B cell (primary cell): ENCODE measurements at regions of chr11 and their contacts with region 1.

Region 1: DNA sequence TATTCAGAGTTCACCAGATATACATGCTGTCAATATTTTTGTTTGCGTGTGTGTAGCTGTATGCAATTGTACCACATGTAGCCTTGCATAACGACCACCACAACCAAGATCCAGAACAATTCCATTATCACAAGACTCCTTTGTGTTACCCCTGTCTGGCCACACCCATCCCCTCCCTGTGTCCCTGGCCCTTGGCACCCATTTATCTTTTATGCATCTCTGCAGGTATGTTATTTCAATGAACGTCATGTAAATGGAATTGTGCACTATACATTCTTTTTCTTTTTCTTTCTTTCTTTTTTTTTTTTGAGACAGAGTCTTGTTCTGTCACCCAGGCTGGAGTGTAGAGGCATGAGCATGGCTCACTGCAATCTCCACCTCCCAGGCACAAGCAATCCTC is 9.7 kb upstream of the PAFAH1B2 start:
- DNase-seq: no peak
- ATAC-seq: no peak
- H3K4me3 ChIP-seq: no peak overlapping the region
- H3K4me3 Mint-ChIP-seq: no peak overlapping the region
- H3K27ac ChIP-seq: no peak overlapping the region
- H3K27ac Mint-ChIP-seq: no peak overlapping the region
- H3K4me1 ChIP-seq: no peaks in the 10 kb centered on the region
- H3K4me1 Mint-ChIP-seq: no peaks in the 10 kb centered on the region
- H3K27me3 ChIP-seq: no peaks in the 10 kb centered on the region
- H3K27me3 Mint-ChIP-seq: no peaks in the 10 kb centered on the region
- CTCF ChIP-seq: no peak

Region 2: DNA sequence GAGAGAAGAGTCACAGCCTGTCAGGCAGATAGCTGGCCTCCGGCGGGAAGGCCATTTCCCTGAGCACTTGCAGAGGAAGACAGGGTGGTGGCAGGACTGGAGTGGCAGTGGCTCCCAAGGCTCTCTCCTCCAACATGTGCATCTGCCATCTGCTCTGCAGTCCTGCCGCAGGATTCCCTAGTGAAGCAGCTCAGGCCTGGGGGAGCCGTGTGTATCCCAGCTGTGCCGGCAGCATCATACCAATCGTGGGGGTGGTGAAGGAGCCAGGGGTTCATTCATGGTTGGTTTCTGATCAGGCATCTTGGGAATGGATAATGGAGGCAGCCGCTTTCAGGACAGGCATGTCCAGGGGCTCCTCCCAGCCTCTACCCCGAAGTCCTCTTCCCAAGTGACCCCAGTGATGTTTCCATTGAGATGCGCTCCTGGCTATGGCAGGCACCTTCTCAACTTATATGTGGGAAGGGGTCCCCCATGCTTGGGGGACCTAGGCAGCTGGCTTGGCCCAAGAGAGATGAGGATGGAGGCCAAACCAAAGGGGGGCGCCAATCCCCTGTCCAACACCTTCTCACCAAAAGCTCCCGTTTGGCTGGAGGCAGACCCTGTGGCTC is 70.9 kb after region 1 on chr11:
- CTCF ChIA-PET with region 1: no interaction called
- POLR2A ChIA-PET with region 1: no interaction called
- intact Hi-C with region 1: loop called (anchors 5 kb)
- DNase-seq: no peak
- ATAC-seq: no peak
- H3K4me3 ChIP-seq: no peak overlapping the region
- H3K4me3 Mint-ChIP-seq: no peak overlapping the region
- H3K27ac ChIP-seq: no peak overlapping the region
- H3K27ac Mint-ChIP-seq: peak overlapping the region; percentile 53
- H3K4me1 ChIP-seq: peaks cover 15 to 22% of the 10 kb centered on the region in 2 donors
- H3K4me1 Mint-ChIP-seq: peaks cover 9% of the 10 kb centered on the region
- H3K27me3 ChIP-seq: no peaks in the 10 kb centered on the region
- H3K27me3 Mint-ChIP-seq: no peaks in the 10 kb centered on the region
- CTCF ChIP-seq: no peak